PC-3 (cell line): ENCODE measurements at regions of chr21 and their contacts with region 1.

Region 1: DNA sequence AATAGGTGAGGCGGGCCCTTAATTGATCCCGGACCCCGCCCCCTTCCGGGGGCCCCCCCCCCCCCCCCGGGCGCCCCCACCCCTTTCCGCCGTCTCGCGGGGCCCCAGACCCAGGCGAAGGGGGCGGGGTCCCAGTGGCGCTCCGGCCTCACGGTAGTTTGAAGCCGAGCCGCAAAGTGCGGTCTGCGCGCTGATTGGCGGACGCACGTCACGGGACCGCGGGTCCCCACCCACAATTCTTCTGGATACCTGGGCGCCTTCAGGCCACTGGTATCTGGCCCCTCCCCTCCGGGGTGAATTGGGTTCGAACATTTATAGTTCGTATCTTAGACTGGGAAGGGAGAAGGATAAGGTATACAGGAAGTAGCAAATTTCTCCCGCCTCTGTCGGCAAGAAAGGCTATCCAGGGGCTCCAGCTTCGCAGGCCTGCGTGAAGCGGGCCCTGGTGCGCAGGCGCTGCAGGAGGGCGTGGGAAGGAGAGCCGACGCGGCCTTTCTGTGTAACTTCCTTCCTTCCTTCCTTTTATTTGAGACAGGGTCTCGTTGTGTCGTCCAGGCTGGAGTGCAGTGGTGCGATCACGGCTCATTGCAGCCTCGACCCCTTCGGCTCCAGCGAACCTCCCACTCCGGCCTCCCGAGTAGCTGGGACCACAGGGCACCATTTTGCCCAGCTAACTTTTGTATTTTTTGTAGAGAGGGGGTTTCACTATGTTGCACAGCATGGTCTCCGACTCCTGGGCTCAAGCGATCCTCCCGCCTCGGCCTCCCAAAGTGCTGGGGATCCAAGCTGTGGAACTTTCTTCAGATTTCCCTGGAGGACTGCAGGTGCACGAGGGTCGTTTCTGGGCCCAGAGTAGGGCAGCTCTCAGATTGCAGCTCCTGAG is 564 bp upstream of the HMGN1 start:
- DNase-seq: peak; percentile 99
- ATAC-seq: peak; percentile 88
- H3K4me3 ChIP-seq: peak overlapping the region; percentile 75
- H3K27ac ChIP-seq: peak overlapping the region; percentile 85
- H3K4me1 ChIP-seq: peaks cover 25% of the 10 kb centered on the region
- H3K27me3 ChIP-seq: no peaks in the 10 kb centered on the region
- CTCF ChIP-seq: no peak

Region 2: GRCh38 chr21:39263372-39263771 is 86.1 kb before region 1 on chr21:
- CTCF ChIA-PET with region 1: no interaction called
- POLR2A ChIA-PET with region 1: no interaction called
- intact Hi-C with region 1: no loop called
- DNase-seq: peak; percentile 15
- ATAC-seq: no peak; the same call in 1 of the 2 replicates
- H3K4me3 ChIP-seq: no peak overlapping the region
- H3K27ac ChIP-seq: no peak overlapping the region
- H3K4me1 ChIP-seq: no peaks in the 10 kb centered on the region
- H3K27me3 ChIP-seq: no peaks in the 10 kb centered on the region
- CTCF ChIP-seq: no peak

Region 3: DNA sequence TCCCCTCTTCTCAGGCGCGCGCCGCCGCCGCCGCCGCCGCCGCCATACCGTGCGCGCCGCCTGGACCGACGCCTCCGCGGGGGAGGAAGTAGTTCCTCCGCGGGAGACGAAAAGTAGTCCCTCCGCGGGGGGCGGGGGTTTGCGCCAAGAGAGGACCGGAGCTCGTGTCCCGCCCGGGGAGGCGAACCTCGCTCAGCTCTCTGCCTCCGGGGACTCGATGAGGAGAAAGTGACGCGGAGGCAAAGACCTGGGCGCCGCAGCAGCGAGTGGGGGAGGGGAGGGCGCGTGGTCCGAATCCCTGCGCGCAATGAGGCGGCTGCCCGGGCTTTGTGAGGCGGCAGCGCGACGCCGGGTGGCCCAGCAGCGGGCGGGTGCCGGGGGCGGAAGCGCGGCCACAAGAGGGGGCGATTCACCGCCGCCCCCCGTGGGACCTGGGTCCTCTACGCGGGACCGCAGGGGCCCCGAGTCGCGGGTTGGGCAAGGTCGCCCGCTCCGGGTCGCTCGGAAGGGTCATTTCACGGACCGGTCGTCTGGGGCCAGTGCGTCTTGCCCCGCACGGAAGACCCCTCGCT is 35.8 kb before region 1 on chr21 and contains the start of gene BRWD1:
- CTCF ChIA-PET with region 1: no interaction called
- POLR2A ChIA-PET with region 1: interaction called, 6 read pairs
- intact Hi-C with region 1: loop called (anchors 1 kb)
- DNase-seq: peak; percentile 77
- ATAC-seq: peak; percentile 55
- H3K4me3 ChIP-seq: peak within 1 kb of the TSS; percentile 77
- H3K27ac ChIP-seq: peak within 1 kb of the TSS; percentile 71
- H3K4me1 ChIP-seq: peaks cover 20% of the 10 kb centered on the region
- H3K27me3 ChIP-seq: no peaks in the 10 kb centered on the region
- CTCF ChIP-seq: no peak
- total RNA-seq, gene BRWD1: 25.1 and 29.3 TPM in 2 replicates

Region 4: DNA sequence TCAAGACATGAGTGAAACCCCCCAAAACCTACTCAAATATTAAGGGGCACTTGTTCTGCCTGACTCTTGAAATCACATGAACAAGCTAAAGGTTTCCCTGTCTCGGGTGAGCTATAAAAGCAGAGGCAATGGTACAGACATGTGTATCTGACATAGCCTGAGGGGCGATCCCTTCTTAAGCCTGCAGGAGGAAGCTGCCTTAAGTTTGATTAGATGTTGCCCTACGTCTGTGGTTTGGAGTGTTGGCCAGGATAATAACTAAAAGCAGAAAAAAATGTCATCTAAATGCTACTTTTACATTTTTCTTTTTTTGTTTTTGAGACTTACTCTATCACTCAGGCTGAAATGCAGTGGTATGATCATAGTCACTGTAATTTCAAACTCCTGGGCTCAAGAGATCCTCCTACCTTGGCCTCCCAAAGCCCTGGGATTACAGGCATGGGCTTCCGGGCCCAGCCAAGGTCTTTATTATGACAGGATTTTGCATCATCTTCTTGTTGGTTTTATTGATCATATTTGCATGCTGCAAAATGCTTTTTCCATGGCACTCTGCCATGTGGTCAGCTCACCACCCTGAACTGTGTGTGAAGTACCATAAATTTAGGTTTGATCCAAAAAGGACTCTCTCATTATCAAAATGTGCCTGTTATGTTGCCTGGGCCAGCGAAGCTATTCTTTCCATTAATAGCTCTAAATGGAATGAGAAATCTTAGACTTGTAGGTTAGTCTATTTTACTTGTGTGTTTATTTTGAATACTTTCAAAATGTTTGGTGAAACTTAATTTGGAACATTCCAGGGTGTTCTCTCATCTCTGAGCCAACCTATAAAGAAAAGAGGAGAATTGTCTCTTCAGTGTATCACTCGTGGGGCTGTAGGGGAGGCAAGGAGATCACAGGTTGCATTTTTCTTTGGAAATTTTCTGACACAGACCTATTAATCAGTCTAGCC is 14.4 kb after region 1 on chr21:
- CTCF ChIA-PET with region 1: no interaction called
- POLR2A ChIA-PET with region 1: no interaction called
- intact Hi-C with region 1: no loop called
- DNase-seq: no peak
- ATAC-seq: no peak
- H3K4me3 ChIP-seq: no peak overlapping the region
- H3K27ac ChIP-seq: no peak overlapping the region
- H3K4me1 ChIP-seq: no peaks in the 10 kb centered on the region
- H3K27me3 ChIP-seq: no peaks in the 10 kb centered on the region
- CTCF ChIP-seq: no peak

Region 5: DNA sequence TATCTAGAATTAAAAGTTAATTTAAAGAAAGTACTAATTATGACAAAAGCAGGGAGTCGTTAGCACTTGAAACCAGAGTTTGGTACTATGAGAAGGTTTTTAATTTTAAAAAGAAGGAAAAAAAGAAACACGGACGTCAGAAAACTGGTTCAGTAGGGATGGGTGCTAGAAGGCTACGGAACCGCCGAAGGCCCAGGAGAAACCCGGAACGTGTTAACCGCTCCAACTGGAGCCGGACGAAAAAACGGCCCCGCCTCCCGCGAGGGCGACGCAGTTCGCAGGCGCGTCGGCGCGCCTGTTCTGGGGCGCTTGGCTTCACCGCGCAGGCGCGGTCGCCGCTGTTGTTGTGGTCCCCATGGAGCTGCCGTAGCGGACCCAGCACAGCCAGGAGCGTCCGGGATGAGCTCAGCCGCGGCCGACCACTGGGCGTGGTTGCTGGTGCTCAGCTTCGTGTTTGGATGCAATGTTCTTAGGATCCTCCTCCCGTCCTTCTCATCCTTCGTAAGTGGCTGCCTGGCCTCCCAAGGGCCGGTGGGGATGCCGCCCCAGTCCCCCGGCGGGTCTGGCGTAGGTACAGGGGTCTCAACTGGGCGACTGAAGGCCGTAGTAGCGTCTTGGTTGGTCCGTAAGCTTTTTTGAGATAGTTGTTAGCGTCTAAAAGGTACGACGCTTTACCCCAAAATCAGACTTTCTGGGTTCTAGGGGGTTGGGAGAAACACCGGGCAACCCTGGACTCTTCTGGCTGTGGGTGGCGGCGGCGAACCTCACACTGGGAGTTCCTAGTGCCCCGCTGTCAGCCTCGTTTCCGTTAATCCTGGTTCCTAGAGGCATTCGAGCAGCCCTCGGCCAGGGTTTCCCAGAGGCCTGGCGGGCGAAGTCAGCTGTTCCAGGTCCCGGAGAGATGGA is 30.8 kb after region 1 on chr21:
- CTCF ChIA-PET with region 1: no interaction called
- POLR2A ChIA-PET with region 1: interaction called, 38 read pairs
- intact Hi-C with region 1: loop called (anchors 2 kb)
- DNase-seq: peak; percentile 97
- ATAC-seq: peak; percentile 92
- H3K4me3 ChIP-seq: peak overlapping the region; percentile 85
- H3K27ac ChIP-seq: peak overlapping the region; percentile 17; the same call in 1 of the 2 replicates
- H3K4me1 ChIP-seq: peaks cover 19% of the 10 kb centered on the region
- H3K27me3 ChIP-seq: no peaks in the 10 kb centered on the region
- CTCF ChIP-seq: no peak